Heart right ventricle (tissue), 16 donors: ENCODE measurements at regions of chr5 and their contacts with region 1.

Region 1: DNA sequence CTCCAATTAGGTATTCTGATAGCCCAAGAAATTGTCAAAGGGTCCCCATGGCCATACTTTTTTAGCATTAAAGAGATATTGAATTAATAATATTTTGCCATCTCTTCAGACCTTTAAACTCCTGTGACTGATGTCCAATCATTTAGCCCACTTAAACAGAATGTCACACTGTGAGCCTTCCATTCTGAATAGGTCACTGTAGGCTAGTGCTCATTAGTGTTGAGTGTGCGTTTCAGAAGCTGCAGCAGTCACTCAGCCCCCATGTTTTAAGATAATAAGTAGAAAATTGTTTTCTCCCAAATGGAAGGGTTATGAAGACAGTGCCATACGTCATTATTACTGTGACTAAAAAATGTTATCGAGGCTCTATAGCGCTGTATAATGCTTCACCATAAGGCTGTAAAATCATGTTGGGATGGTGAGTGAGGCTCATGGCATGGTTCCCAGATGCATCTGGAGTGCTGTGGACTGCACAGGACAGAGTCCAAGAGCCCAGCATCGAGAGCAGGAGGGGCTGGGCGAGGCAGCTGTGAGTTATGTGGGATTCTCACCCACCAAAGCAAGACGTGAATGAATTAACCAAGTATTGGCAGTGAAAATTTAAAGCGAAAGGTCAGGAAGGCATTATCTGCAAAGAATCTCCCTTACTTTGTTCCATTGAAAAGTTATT is 2112.9 kb upstream of the WWC1 start:
- DNase-seq: no peak
- ATAC-seq: no peak
- H3K4me3 ChIP-seq: no peak overlapping the region
- H3K27ac ChIP-seq: no peak overlapping the region
- H3K4me1 ChIP-seq: no peaks in the 10 kb centered on the region
- H3K27me3 ChIP-seq: no peaks in the 10 kb centered on the region
- CTCF ChIP-seq: no peak

Region 2: GRCh38 chr5:166127766-166128565 is 50.6 kb before region 1 on chr5:
- intact Hi-C with region 1: loop called in 1 of 10 experiments (anchors 2 kb)
- DNase-seq: no peak
- ATAC-seq: no peak
- H3K4me3 ChIP-seq: no peak overlapping the region
- H3K27ac ChIP-seq: no peak overlapping the region
- H3K4me1 ChIP-seq: no peaks in the 10 kb centered on the region
- H3K27me3 ChIP-seq: no peaks in the 10 kb centered on the region
- CTCF ChIP-seq: no peak

Region 3: GRCh38 chr5:166354277-166354820 is 175.8 kb after region 1 on chr5:
- intact Hi-C with region 1: no loop called
- DNase-seq: no peak
- ATAC-seq: no peak
- H3K4me3 ChIP-seq: no peak overlapping the region
- H3K27ac ChIP-seq: no peak overlapping the region
- H3K4me1 ChIP-seq: no peaks in the 10 kb centered on the region
- H3K27me3 ChIP-seq: no peaks in the 10 kb centered on the region
- CTCF ChIP-seq: no peak

Region 4: DNA sequence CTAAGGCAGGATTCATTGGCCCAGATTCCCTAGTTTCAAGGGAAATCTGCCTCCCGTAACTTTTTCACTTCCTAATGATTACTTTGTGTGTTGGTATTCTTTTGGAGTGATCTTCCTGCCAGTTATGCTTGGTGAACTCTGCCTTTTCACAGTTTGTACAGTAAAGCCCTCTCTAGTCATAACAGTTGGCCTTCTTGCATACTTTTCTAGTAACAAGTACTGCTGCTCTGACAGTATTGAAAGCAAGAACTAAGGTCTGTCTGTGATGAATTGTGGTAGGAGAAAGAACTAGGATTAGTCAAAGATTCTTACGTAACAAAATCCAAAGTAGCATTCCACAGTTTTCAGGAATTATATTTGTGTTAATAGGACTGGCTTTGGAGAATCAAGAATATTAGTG is 655.7 kb after region 1 on chr5:
- intact Hi-C with region 1: no loop called
- DNase-seq: no peak
- ATAC-seq: no peak
- H3K4me3 ChIP-seq: no peak overlapping the region
- H3K27ac ChIP-seq: no peak overlapping the region
- H3K4me1 ChIP-seq: no peaks in the 10 kb centered on the region
- H3K27me3 ChIP-seq: no peaks in the 10 kb centered on the region
- CTCF ChIP-seq: no peak